ENCODE measurements at regions of chr1 and their contacts with region 1.

Region 1: DNA sequence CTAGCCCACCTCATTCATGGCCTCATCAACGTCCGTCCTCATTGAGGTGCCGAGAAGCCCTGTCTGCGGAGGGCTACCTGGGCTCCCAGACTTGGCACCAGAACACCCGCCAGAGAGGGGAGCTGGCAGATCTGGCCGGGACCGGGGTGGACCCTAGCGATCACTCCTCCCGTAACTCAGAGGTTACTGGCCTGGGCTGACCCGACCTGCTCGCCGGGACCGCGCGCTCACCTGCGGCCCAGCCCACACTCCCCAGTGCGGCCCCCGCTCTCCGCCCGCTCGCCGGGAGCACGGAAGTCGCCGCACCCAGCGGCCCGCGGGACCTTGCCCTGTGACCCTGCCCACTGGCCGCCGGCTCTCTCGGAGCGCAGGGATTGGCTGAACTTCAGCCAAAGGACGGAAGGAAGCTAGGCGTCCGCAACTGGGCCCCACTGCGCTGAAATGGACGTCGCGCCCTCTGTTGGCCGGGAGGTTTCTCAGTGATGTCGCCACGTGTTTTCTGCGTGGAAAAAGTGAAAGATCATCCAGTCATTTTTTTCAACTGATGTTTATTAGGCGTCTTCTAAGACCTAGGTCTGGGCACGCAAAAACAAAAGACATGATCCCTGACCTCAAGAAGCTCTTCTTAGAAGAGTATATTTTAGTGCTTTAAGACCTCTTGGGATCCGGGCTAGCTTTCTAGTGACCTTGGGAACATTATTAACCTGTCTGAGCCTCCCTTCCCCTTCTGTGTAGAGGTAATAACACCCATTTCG is at the start of gene SMIM12:
- DNase-seq: peak; percentile 86 to 94 (median 93)
- H3K4me3 ChIP-seq: peak within 1 kb of the TSS; percentile 66 to 100 (median 95)
- H3K27ac ChIP-seq: peak within 1 kb of the TSS; percentile 18 to 94 (median 81)
- H3K27me3 ChIP-seq: no peaks in the 10 kb centered on the region
- CTCF ChIP-seq: peak; percentile 87 to 99 (median 97)
- total RNA-seq, gene SMIM12: 28.2 to 65.2 (median 48.3) TPM

Region 2: GRCh38 chr1:34268311-34268954 is 591.2 kb before region 1 on chr1:
- intact Hi-C with region 1: no loop called
- DNase-seq: peak in 5 of 10 donors; percentile 38 to 55 (median 47)
- H3K4me3 ChIP-seq: no peak overlapping the region
- H3K27ac ChIP-seq: peak overlapping the region in 21 of 59 donors; percentile 7 to 62 (median 39)
- H3K27me3 ChIP-seq: peaks cover 0 to 22% (median 0%) of the 10 kb centered on the region in 45 donors
- CTCF ChIP-seq: no peak

Region 3: GRCh38 chr1:34786521-34787325 is 72.9 kb before region 1 on chr1:
- intact Hi-C with region 1: loop called in 1 of 2 experiments (anchors 2 kb)
- DNase-seq: peak; percentile 68 to 88 (median 82)
- H3K4me3 ChIP-seq: no peak overlapping the region
- H3K27ac ChIP-seq: peak overlapping the region in 13 of 59 donors; percentile 10 to 60 (median 33)
- H3K27me3 ChIP-seq: peaks cover 0 to 19% (median 9%) of the 10 kb centered on the region in 45 donors
- CTCF ChIP-seq: peak; percentile 67 to 95 (median 88)

Region 4: DNA sequence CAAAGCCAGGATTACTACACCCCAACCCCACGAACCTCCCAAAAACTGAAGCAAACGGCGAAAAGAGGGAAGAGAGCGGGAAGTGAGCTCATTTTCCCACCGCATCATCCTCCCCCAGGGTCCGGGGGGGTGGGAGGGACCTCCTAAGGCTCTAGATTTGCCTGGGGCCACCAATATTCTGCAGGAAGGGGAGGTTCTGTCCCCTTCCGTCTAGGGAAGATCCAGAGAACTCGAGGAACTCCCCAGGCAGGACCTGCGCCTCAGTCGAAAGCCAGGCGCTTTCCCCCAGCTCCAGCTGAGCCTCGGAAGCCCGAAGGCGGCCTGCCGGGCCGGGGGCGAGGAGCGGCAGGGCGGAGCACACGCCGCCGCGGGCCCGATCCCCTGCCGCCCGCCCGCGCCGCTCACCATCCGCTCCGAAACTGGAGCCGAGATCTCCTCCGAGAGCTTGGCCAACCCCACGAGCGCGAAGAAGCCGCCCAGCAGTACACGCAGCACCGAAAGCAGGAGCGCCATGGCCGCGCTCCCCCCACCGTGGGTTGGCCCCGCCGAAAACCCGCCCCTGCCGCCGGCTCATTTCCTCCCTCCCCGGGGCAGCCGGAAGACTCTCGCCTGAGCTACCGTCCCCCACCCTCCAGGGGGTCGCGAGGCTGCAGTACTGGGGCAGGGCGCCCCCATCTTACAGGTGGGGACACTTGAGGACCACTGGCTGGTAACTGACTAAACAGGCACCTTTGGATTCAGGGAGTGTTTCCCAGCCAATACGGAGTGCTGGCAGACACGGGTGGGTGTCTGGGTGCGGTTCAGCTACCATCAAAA is 125.4 kb after region 1 on chr1 and contains the start of gene TMEM35B:
- intact Hi-C with region 1: loop called in 1 of 2 experiments (anchors 10 kb)
- DNase-seq: peak in 9 of 10 donors; percentile 35 to 80 (median 54)
- H3K4me3 ChIP-seq: peak within 1 kb of the TSS; percentile 59 to 93 (median 79)
- H3K27ac ChIP-seq: peak within 1 kb of the TSS in 58 of 59 donors; percentile 48 to 95 (median 88)
- H3K27me3 ChIP-seq: no peaks in the 10 kb centered on the region
- CTCF ChIP-seq: peak in 6 of 56 donors; percentile 11 to 22 (median 14)
- total RNA-seq, gene TMEM35B: 0.79 to 14.2 (median 4.7) TPM

Region 5: DNA sequence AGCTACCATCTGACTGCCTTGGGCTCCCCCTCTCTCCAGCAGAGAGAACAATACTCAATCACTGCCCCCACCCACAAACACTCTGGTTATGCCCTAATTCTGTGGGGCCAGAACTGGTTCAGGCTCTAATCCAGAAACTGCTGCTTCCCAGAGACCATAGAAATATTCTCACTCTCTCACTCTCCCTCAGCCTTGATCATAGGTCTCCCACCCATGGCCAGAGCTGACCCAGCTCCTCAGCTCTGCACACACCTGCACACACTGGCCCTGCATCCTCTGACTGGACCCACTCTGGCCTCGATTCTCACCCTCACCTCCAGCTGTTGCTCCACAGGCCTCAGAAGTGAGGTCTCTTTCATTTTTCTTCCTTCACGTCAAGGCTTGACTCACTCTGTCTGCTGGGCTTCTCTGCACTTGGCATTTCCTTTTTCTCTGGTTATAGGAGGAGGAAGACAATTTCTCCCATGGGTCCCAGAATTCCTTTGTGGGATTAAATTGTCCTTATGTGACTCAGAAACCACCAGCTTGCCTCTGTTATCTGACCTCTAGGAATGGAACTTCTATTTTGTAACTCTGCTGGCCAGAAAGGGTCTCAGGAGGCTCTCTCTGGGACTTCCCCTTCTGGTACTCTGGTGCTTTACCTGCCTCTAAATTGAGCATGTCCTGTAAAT is 187.7 kb after region 1 on chr1:
- intact Hi-C with region 1: no loop called
- DNase-seq: no peak
- H3K4me3 ChIP-seq: no peak overlapping the region
- H3K27ac ChIP-seq: no peak overlapping the region
- H3K27me3 ChIP-seq: no peaks in the 10 kb centered on the region
- CTCF ChIP-seq: no peak

Region 6: GRCh38 chr1:35079003-35079930 is 219.6 kb after region 1 on chr1 and contains the start of gene ZMYM1:
- intact Hi-C with region 1: loop called in 1 of 2 experiments (anchors 10 kb)
- DNase-seq: peak; percentile 66 to 90 (median 79)
- H3K4me3 ChIP-seq: peak within 1 kb of the TSS; percentile 55 to 98 (median 82)
- H3K27ac ChIP-seq: peak within 1 kb of the TSS in 58 of 59 donors; percentile 58 to 94 (median 83)
- H3K27me3 ChIP-seq: no peaks in the 10 kb centered on the region
- CTCF ChIP-seq: peak in 21 of 56 donors; percentile 9 to 45 (median 26)
- total RNA-seq, gene ZMYM1: 4.2 to 23.4 (median 11.6) TPM

Region 7: GRCh38 chr1:35298464-35298863 is 438.8 kb after region 1 on chr1:
- intact Hi-C with region 1: loop called in 1 of 2 experiments (anchors 10 kb)
- DNase-seq: peak in 1 of 10 donors; percentile 15
- H3K4me3 ChIP-seq: no peak overlapping the region
- H3K27ac ChIP-seq: no peak overlapping the region
- H3K27me3 ChIP-seq: no peaks in the 10 kb centered on the region
- CTCF ChIP-seq: peak in 53 of 56 donors; percentile 10 to 75 (median 50)

Measured in dorsolateral prefrontal cortex (tissue), 120 donors.